Activated naive CD4-positive, alpha-beta T cell treated with anti-CD3 and anti-CD28 coated beads, Interleukin-2, amount 10 ng/mL, durations not matched to agents 7 days and 5 days (primary cell): ENCODE measurements at regions of chr14 and their contacts with region 1.

Region 1: DNA sequence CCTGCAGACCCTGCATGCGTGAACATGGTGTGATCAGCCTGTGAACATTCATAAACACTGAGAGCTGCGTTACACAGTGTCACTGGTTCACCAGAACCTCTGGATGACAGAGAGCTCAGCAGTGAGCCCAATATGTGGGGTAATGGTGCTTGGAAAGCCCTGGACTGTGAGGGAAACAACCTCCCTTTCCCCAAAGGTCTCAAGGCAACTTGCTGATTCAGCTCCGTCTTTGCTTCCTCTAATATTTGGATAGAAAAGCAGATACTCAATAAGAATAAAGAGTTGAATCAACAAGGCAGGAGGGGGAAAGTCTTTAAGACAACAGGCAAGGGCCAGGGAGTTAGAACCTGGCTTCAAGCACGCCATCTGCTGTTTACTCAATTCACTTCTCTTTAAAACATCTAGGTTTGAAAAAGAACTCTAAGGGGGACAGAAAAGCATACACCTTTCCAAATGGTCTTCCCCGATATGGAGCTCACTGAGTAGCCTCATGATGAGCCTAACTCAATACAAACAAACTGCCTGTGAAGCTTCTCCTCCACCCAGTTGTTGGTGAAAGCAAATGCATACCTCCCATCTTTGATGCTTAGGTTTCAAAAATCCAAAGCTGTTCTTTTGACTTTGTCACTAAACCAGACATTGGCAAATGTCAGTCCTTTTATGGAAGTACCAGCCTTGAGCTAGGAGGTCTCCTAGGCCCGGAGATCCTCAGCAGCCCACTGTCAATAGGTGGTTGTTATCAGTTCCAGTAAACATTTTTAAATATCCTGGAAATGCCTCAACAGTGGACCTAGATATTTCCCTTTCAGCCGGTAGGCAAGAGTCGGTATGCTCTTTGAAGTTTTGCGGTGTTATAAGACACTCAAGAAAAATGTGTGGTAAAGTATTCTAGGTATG is 76.1 kb downstream of the SAMD4A start:
- DNase-seq: no peak
- H3K4me3 Mint-ChIP-seq: no peak overlapping the region
- H3K27ac Mint-ChIP-seq: no peak overlapping the region
- H3K4me1 Mint-ChIP-seq: peaks cover 2% of the 10 kb centered on the region
- H3K27me3 Mint-ChIP-seq: peaks cover 28% of the 10 kb centered on the region

Region 2: GRCh38 chr14:54631016-54631415 is 12.0 kb before region 1 on chr14:
- CTCF ChIA-PET with region 1: interaction called, 14 read pairs
- DNase-seq: no peak
- H3K4me3 Mint-ChIP-seq: no peak overlapping the region
- H3K27ac Mint-ChIP-seq: no peak overlapping the region
- H3K4me1 Mint-ChIP-seq: peaks cover 43% of the 10 kb centered on the region
- H3K27me3 Mint-ChIP-seq: no peaks in the 10 kb centered on the region